ENCODE measurements at regions of chr14 and their contacts with region 1.

Region 1: GRCh38 chr14:70955543-70956480 is 48.6 kb downstream of the PCNX1 start:
- DNase-seq: peak; percentile 44
- ATAC-seq: peak; percentile 92
- H3K4me3 ChIP-seq: no peak overlapping the region
- H3K27ac ChIP-seq: no peak overlapping the region
- H3K4me1 ChIP-seq: no peaks in the 10 kb centered on the region; the same call in 1 of the 2 replicates
- H3K27me3 ChIP-seq: no peaks in the 10 kb centered on the region
- CTCF ChIP-seq: peak; percentile 93

Region 2: GRCh38 chr14:70622111-70622712 is 333.6 kb before region 1 on chr14:
- CTCF ChIA-PET with region 1: no interaction called
- POLR2A ChIA-PET with region 1: no interaction called
- intact Hi-C with region 1: loop called (anchors 5 kb)
- DNase-seq: peak; percentile 82
- ATAC-seq: peak; percentile 99
- H3K4me3 ChIP-seq: no peak overlapping the region
- H3K27ac ChIP-seq: no peak overlapping the region
- H3K4me1 ChIP-seq: peaks cover 5% of the 10 kb centered on the region; the same call in 1 of the 2 replicates
- H3K27me3 ChIP-seq: no peaks in the 10 kb centered on the region
- CTCF ChIP-seq: peak; percentile 94

Region 3: GRCh38 chr14:70726651-70727375 is 229.0 kb before region 1 on chr14:
- CTCF ChIA-PET with region 1: interaction called, 19 read pairs
- POLR2A ChIA-PET with region 1: no interaction called
- intact Hi-C with region 1: no loop called
- DNase-seq: no peak
- ATAC-seq: no peak
- H3K4me3 ChIP-seq: no peak overlapping the region
- H3K27ac ChIP-seq: no peak overlapping the region
- H3K4me1 ChIP-seq: no peaks in the 10 kb centered on the region
- H3K27me3 ChIP-seq: no peaks in the 10 kb centered on the region
- CTCF ChIP-seq: no peak

Region 4: GRCh38 chr14:72000907-72001306 is 1045.1 kb after region 1 on chr14:
- CTCF ChIA-PET with region 1: no interaction called
- POLR2A ChIA-PET with region 1: interaction called, 21 read pairs
- intact Hi-C with region 1: no loop called
- DNase-seq: no peak
- ATAC-seq: no peak
- H3K4me3 ChIP-seq: no peak overlapping the region
- H3K27ac ChIP-seq: no peak overlapping the region
- H3K4me1 ChIP-seq: no peaks in the 10 kb centered on the region
- H3K27me3 ChIP-seq: peaks cover 40% of the 10 kb centered on the region
- CTCF ChIP-seq: no peak

Measured in PC-3 (cell line).